ENCODE measurements at regions of chr6 and their contacts with region 1.

Region 1: DNA sequence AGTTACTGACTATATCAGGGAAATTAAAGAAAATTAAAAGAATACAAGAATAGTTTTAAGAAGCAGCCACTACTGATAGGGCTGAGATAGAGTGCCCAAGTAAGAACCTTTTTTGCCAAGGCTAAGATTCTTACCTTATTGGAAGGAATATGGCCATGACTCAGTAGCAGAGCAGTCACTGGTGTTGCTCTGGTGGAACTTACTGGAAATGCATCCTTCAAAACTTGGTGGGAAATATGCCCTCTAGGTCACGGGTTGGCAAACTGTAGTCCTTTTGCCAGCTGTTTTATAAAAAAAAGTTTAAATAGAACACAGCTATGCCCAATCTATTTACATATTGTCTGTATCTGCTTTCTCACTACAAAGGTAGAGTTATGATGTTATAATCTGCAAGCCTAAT is 6.0 kb downstream of the HSF2 start:
- DNase-seq: no peak
- H3K4me3 ChIP-seq: no peak overlapping the region
- H3K27ac ChIP-seq: no peak overlapping the region
- H3K4me1 ChIP-seq: peaks cover 0 to 37% (median 22%) of the 10 kb centered on the region in 4 donors
- H3K27me3 ChIP-seq: no peaks in the 10 kb centered on the region
- CTCF ChIP-seq: no peak
- EP300 ChIP-seq: no peak
- POLR2A ChIP-seq: no peak

Region 2: DNA sequence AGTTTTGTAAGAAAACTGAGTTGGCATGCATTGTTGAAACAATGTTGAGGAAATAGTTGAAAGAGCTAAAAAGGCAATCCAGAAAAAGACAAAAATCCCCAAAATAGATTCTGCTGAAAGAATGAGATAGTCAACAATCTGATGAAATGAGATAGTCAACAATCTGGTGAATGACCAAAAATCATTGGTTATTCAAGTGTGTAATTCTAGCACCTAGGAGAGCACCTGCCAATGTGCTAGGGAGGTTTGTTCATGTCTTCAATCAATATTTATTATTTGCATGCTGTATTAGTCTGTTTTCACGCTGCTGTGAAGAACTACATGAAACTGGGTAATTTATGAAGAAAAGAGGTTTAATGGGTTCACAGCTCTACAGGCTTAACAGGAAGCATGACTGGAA is 313.1 kb before region 1 on chr6:
- intact Hi-C with region 1: no loop called
- DNase-seq: no peak
- H3K4me3 ChIP-seq: no peak overlapping the region
- H3K27ac ChIP-seq: no peak overlapping the region
- H3K4me1 ChIP-seq: no peaks in the 10 kb centered on the region
- H3K27me3 ChIP-seq: no peaks in the 10 kb centered on the region
- CTCF ChIP-seq: no peak
- EP300 ChIP-seq: no peak
- POLR2A ChIP-seq: no peak

Region 3: GRCh38 chr6:122180132-122180531 is 225.3 kb before region 1 on chr6:
- intact Hi-C with region 1: no loop called
- DNase-seq: no peak
- H3K4me3 ChIP-seq: no peak overlapping the region
- H3K27ac ChIP-seq: no peak overlapping the region
- H3K4me1 ChIP-seq: no peaks in the 10 kb centered on the region
- H3K27me3 ChIP-seq: no peaks in the 10 kb centered on the region
- CTCF ChIP-seq: no peak
- EP300 ChIP-seq: no peak
- POLR2A ChIP-seq: no peak

Region 4: DNA sequence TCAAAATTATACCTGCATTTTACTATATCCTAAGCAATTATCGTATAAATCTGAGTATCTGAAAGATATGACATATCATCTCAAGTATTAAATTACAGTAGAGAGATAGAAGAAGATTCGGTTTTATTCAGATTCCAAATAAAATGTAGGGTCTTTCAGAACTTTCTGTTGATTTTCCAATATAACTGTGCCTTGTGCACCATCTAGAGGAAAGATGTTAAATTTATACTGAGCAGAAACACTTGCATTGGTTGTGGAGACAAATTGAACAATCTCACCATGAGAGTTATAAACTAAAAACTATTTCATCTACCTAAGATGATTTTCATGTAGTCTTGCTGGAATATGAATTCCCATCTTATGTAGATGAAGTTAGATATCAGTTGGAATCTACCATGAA is 32.8 kb before region 1 on chr6:
- intact Hi-C with region 1: no loop called
- DNase-seq: no peak
- H3K4me3 ChIP-seq: no peak overlapping the region
- H3K27ac ChIP-seq: no peak overlapping the region
- H3K4me1 ChIP-seq: no peaks in the 10 kb centered on the region
- H3K27me3 ChIP-seq: no peaks in the 10 kb centered on the region
- CTCF ChIP-seq: no peak
- EP300 ChIP-seq: no peak
- POLR2A ChIP-seq: no peak

Region 5: DNA sequence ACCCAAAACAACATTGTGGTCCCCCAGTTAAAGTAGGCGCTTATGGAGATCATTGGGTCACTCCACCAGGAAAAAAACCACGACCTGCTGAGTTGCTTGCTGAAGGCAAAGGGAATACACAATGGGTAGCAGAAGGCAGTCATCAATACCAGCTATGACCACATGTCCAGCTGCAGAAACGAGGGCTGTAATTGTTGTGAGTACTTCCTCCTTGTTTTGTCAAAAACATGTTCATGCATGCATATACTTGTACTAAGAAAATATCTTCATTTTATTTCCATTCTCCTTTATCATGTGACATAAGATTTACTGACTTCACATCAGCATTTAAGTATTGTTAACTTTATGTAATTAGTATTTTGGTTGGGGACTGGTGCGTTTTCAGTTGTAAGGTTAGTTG is 49.3 kb after region 1 on chr6:
- intact Hi-C with region 1: loop called (anchors 5 kb)
- DNase-seq: no peak
- H3K4me3 ChIP-seq: no peak overlapping the region
- H3K27ac ChIP-seq: no peak overlapping the region
- H3K4me1 ChIP-seq: peaks cover 0 to 31% (median 11%) of the 10 kb centered on the region in 4 donors
- H3K27me3 ChIP-seq: no peaks in the 10 kb centered on the region
- CTCF ChIP-seq: no peak
- EP300 ChIP-seq: no peak
- POLR2A ChIP-seq: no peak

Measured in sigmoid colon (tissue), 7 donors.